ENCODE measurements at regions of chr15 and their contacts with region 1.

Region 1: DNA sequence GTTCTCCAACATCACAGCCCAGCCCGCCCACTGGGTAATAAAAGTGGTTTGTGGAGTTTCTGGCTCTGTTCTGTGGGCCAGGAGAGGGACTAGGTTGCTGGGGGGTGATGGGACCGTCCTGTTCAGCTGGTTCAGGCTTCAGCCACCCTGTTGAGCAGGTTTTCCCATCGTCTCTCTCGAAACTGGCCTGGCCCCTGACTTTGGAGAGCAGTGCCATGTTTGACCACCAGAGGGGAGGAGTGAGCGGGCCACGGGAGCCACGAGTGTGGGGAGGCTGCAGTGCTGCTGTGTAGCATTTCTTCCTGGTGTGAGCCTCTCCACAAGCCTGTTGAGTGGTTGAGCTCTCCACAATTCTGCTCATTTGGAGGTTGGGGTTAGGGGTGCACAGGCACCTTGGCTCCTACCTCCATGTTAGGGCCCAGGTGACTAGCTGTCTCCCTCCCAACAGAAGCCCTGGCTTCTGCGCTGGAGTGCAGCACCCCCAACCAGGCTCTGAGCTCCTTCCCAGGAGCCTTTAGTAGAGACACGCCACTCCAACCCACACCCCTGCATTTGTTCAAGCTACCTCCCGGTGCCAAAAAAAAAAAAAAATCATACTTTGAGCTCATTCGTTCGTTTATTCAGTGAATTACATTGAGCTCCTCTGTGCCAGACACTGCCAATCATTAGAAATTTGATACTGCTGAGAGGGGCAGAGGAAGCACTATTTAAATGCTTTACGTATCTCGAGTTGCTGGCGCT is 13.9 kb downstream of the SPINT1 start:
- DNase-seq: peak; percentile 80
- H3K4me3 Mint-ChIP-seq: no peak overlapping the region
- H3K27ac Mint-ChIP-seq: no peak overlapping the region
- H3K4me1 Mint-ChIP-seq: peaks cover 22% of the 10 kb centered on the region
- H3K27me3 Mint-ChIP-seq: no peaks in the 10 kb centered on the region
- CTCF ChIP-seq: peak; percentile 89

Region 2: GRCh38 chr15:40769274-40770146 is 88.3 kb before region 1 on chr15 and contains the start of gene C15orf62:
- CTCF ChIA-PET with region 1: interaction called, 12 read pairs
- POLR2A ChIA-PET with region 1: no interaction called
- intact Hi-C with region 1: no loop called
- DNase-seq: peak; percentile 96
- H3K4me3 Mint-ChIP-seq: peak within 1 kb of the TSS; percentile 64
- H3K27ac Mint-ChIP-seq: peak within 1 kb of the TSS; percentile 84
- H3K4me1 Mint-ChIP-seq: peaks cover 48% of the 10 kb centered on the region
- H3K27me3 Mint-ChIP-seq: no peaks in the 10 kb centered on the region
- CTCF ChIP-seq: no peak
- total RNA-seq, gene C15orf62: 0.26 and 0.52 TPM in 2 replicates

Region 3: DNA sequence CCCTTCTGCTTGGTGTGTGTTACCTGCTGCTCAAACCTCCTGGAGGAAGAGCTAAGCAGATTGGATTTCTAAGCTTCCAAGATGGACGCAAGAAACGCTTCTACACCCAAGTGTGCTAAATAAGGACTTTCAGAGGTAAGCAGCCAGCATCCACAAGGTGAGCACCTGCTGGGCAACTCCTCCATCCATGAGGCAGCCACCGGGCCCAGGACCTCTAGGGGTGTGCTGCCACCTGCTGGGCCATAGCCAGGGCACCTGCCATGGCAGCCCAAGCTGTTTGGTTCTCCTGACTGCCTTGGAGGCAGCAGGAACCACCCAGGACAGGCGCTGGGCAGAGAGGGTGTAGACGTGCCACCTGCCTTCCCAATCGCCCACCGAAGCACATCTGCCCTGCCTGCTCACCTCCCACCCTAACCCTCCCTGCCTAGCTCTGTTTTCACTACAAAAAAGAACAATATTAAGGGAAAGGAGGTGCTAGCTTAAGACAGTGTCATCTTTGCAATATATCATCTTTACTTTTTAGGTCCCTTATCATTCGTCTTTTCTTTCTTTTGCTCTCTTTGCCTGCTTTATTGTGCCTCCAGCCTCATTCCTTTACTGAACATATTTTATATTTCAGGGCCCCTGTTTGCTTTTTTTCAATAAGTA is 75.1 kb before region 1 on chr15:
- CTCF ChIA-PET with region 1: interaction called, 10 read pairs
- POLR2A ChIA-PET with region 1: no interaction called
- intact Hi-C with region 1: no loop called
- DNase-seq: peak; percentile 83
- H3K4me3 Mint-ChIP-seq: no peak overlapping the region
- H3K27ac Mint-ChIP-seq: no peak overlapping the region
- H3K4me1 Mint-ChIP-seq: peaks cover 17% of the 10 kb centered on the region
- H3K27me3 Mint-ChIP-seq: no peaks in the 10 kb centered on the region
- CTCF ChIP-seq: peak; percentile 72

Region 4: DNA sequence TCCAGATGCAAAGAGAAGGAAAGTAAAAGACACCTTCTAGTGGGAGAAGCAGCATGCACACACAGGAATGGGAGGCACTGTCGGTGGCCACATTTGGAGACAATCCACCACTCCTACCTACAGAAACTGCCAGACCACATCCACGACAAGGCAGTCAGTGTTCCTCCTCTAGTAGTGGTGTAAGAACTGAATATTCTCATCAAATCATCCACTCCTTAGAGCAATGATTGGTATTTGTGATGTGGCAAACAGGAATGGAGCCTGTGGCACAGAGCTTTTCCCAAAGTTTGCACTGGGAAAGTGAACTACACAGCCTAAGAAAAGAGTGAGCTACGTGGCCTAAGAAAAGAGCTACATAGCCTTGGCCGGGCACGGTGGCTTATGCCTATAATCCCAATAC is 19.0 kb before region 1 on chr15:
- CTCF ChIA-PET with region 1: interaction called, 130 read pairs
- POLR2A ChIA-PET with region 1: interaction called, 31 read pairs
- intact Hi-C with region 1: no loop called
- DNase-seq: no peak
- H3K4me3 Mint-ChIP-seq: no peak overlapping the region
- H3K27ac Mint-ChIP-seq: no peak overlapping the region
- H3K4me1 Mint-ChIP-seq: peaks cover 8% of the 10 kb centered on the region
- H3K27me3 Mint-ChIP-seq: no peaks in the 10 kb centered on the region
- CTCF ChIP-seq: no peak

Region 5: GRCh38 chr15:40873625-40874561 is 16.1 kb after region 1 on chr15 and contains the start of gene RHOV:
- CTCF ChIA-PET with region 1: interaction called, 3 read pairs
- POLR2A ChIA-PET with region 1: interaction called, 24 read pairs
- intact Hi-C with region 1: no loop called
- DNase-seq: peak; percentile 91
- H3K4me3 Mint-ChIP-seq: peak within 1 kb of the TSS; percentile 77
- H3K27ac Mint-ChIP-seq: peak within 1 kb of the TSS; percentile 52
- H3K4me1 Mint-ChIP-seq: peaks cover 40% of the 10 kb centered on the region
- H3K27me3 Mint-ChIP-seq: no peaks in the 10 kb centered on the region
- CTCF ChIP-seq: peak; percentile 56
- total RNA-seq, gene RHOV: 1.2 and 1.7 TPM in 2 replicates

Region 6: DNA sequence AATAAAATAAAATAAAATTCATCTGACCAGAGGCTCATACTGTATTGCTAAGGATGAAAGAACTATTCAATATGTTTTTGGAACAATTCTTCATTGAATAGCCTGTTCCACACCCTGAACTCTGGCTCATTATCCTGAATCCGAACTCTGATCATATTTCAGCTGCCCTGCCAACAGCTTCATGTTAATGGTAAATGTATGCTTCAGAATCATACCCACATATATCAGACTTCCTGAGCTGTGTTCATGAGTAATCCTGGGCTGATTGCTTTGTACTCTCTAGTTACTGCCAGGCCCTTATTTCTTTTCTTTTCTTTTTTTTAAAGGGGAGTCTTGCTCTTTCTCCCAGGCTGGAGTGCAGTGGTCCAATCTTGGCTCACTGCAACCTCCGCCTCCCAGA is 246.5 kb after region 1 on chr15:
- CTCF ChIA-PET with region 1: no interaction called
- POLR2A ChIA-PET with region 1: no interaction called
- intact Hi-C with region 1: no loop called
- DNase-seq: peak; percentile 18
- H3K4me3 Mint-ChIP-seq: no peak overlapping the region
- H3K27ac Mint-ChIP-seq: no peak overlapping the region
- H3K4me1 Mint-ChIP-seq: peaks cover 5% of the 10 kb centered on the region
- H3K27me3 Mint-ChIP-seq: no peaks in the 10 kb centered on the region
- CTCF ChIP-seq: no peak